ENCODE measurements at regions of chr19 and their contacts with region 1.

Region 1: DNA sequence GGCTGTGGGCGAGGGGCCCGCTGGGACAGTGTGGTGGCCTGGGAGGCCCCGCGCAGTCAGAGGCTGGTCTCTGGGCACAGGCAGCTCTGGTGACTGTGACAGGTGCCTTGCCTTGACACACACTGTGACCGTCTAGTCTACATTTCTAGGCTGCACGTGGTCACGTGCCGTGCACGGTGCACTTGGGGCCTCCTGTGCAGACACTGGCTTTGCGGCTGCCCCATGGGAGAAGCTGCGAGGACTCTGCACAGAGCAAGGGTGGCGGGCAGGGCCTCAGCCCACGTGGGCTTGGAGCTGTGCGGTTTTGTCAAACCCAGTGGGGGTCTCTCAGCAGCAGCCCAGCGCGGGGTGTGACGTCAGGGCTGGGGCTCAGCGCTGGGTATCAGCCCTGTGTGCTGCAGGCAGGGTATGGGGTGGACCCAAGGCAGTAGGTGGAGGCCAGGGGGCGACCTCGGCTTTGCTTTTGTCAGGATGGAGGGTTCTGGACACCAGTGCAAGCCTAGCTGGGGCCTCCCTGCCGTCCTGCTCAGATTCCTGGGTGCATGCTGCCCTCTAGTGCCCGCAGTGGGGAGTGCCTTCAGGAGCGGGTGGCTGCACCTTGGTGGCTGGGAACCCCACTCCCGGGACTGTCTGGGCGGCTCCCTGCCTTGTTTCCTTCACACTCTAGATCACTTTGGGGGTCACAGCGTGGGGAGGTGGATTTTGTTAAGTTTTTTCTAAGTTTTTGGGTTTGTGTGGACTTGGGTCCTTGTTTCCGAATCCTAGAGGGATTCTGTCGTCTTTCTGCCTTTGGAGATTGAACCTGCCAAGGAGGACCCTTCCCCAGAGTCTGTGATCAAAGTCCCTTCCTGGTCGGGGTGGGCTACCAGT is 62.6 kb downstream of the KDM4B start:
- DNase-seq: peak; percentile 78 to 97
- H3K4me3 ChIP-seq: no peak overlapping the region
- CTCF ChIP-seq: peak in 1 of 3 donors; percentile 81
- POLR2A ChIP-seq: no peak

Region 2: DNA sequence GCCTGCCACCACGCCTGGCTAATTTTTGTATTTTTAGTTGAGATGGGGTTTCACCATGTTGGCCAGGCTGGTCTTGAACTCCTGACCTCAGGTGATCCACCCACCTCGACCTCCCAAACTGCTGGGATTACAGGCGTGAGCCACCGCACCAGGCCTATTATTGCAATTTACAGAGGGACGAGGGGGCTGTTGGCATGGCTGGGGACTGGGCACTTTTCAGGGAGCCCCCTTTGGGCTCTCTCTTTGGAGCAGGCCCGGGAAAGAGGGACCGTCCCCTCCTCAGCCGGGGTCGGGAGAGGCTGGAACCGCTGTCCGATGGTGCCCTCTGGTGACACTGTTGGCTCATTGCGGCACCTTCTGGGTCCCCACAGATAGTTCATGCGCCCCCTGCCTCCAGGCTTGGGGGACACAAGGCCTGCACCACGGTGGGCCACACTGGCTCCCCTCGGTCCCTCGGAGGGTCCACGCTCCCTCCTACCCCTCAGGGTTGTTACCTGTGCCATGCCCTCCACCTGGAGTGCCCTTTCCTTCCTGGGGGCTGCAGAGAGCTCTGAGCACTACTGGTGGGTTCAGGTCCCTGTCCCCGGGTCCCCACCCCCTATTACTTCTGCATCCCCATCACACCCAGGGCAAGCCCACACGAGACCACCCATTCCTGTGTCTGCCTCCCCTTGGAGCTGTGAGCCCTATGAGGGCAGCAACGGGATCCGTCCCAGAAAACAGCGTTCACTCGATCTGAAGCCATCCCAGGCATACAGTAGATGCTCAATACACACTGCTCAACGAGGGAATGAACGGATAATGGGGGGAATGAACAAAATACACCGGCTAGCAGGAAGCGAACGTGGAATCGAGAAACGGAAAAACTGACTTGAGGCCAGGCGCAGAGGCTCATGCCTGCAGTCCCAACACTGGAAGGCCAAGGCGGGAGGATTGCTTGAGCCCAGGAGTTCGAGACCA is 227.4 kb before region 1 on chr19:
- intact Hi-C with region 1: loop called (anchors 5 kb)
- DNase-seq: no peak
- H3K4me3 ChIP-seq: no peak overlapping the region
- CTCF ChIP-seq: peak in 1 of 3 donors; percentile 28
- POLR2A ChIP-seq: no peak

Region 3: GRCh38 chr19:5103061-5103701 is 71.7 kb after region 1 on chr19:
- intact Hi-C with region 1: no loop called
- DNase-seq: no peak
- H3K4me3 ChIP-seq: no peak overlapping the region
- CTCF ChIP-seq: no peak
- POLR2A ChIP-seq: no peak

Measured in lower leg skin (tissue), 4 donors.